Activated CD8-positive, alpha-beta T cell treated with anti-CD3 and anti-CD28 coated beads for 36 hours (primary cell): ENCODE measurements at regions of chr16 and their contacts with region 1.

Region 1: GRCh38 chr16:69112285-69113129 is 7.1 kb downstream of the HAS3 start:
- DNase-seq: peak; percentile 74
- ATAC-seq: peak; percentile 91
- H3K4me3 Mint-ChIP-seq: no peak overlapping the region
- H3K27ac Mint-ChIP-seq: no peak overlapping the region
- H3K4me1 Mint-ChIP-seq: peaks cover under 1% of the 10 kb centered on the region
- H3K27me3 Mint-ChIP-seq: peaks cover 13% of the 10 kb centered on the region
- CTCF ChIP-seq: peak; percentile 79

Region 2: DNA sequence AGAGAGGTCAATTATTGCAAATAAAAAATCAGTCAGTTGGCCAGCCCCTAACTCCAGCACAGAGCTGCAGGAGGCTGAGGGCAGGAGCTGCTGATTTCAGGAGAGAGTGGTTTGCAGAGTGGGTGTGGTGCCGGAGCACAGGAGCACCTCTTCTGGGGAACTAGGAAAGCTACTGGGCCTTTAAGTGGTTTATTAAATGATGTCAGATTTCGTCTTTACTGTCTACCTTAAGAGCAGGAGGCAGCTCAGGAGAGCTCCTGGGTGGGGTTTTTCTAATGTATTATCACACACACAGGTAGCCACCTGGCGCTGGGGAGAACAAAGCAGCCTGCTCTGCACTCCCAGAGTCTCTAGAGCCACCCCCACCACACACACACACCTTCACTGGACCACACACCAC is 18.5 kb before region 1 on chr16:
- CTCF ChIA-PET with region 1: interaction called, 11 read pairs
- POLR2A ChIA-PET with region 1: no interaction called
- intact Hi-C with region 1: no loop called
- DNase-seq: no peak
- ATAC-seq: no peak
- H3K4me3 Mint-ChIP-seq: no peak overlapping the region
- H3K27ac Mint-ChIP-seq: no peak overlapping the region
- H3K4me1 Mint-ChIP-seq: peaks cover 6% of the 10 kb centered on the region
- H3K27me3 Mint-ChIP-seq: no peaks in the 10 kb centered on the region
- CTCF ChIP-seq: no peak

Region 3: DNA sequence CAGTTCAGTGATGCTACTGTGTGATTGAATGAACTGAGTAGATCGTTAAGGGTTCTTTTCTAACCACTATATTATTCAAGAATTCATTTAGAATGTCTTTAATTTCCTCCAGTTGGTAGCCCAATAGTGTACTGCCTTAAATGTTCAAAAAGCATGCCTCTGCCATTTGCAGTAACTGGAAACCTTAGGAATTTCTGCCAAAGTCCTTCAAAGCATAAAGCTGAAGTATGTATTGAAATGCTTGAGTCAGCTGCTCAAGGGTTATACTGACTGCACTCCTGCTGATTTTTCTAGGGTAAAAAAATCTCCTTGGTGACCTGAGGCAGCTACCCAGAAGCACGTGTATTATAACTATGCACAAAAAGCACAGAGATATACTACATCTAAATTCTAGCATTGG is 131.0 kb after region 1 on chr16:
- CTCF ChIA-PET with region 1: no interaction called
- POLR2A ChIA-PET with region 1: no interaction called
- intact Hi-C with region 1: no loop called
- DNase-seq: no peak
- ATAC-seq: no peak
- H3K4me3 Mint-ChIP-seq: no peak overlapping the region
- H3K27ac Mint-ChIP-seq: no peak overlapping the region
- H3K4me1 Mint-ChIP-seq: peaks cover 2% of the 10 kb centered on the region
- H3K27me3 Mint-ChIP-seq: no peaks in the 10 kb centered on the region
- CTCF ChIP-seq: no peak